HCT116 (cell line): ENCODE measurements at regions of chr10 and their contacts with region 1.

Region 1: DNA sequence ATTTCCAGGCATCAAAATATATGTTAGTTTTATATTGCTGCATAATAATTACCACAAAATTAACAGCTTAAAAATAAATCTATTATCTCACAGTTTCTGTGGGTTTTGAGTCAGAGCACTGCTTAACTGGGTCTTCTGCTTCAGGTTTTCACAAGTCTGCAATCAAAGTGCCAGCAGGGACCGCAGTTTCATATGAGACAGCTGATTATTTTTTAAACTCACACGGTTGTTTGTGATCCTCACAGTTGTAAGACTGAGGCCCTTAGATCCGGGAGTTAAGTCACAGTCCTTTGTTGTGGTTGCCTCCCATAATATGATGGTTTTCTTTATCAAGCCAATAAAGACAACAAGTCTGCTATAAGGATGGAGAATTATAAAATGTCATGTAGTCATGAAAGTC is 146.0 kb upstream of the ZWINT start:
- DNase-seq: no peak
- ATAC-seq: no peak
- H3K4me3 ChIP-seq: no peak overlapping the region
- H3K27ac ChIP-seq: no peak overlapping the region
- H3K4me1 ChIP-seq: no peaks in the 10 kb centered on the region
- H3K27me3 ChIP-seq: no peaks in the 10 kb centered on the region
- CTCF ChIP-seq: no peak
- POLR2A ChIP-seq: no peak
- RAD21 ChIP-seq: no peak

Region 2: GRCh38 chr10:56327117-56327516 is 179.9 kb before region 1 on chr10:
- CTCF ChIA-PET with region 1: no interaction called
- POLR2A ChIA-PET with region 1: no interaction called
- RAD21 ChIA-PET with region 1: no interaction called
- intact Hi-C with region 1: loop called (anchors 10 kb)
- DNase-seq: no peak
- ATAC-seq: no peak
- H3K4me3 ChIP-seq: no peak overlapping the region
- H3K27ac ChIP-seq: no peak overlapping the region
- H3K4me1 ChIP-seq: no peaks in the 10 kb centered on the region
- H3K27me3 ChIP-seq: no peaks in the 10 kb centered on the region
- CTCF ChIP-seq: no peak
- POLR2A ChIP-seq: no peak
- RAD21 ChIP-seq: no peak

Region 3: GRCh38 chr10:56785292-56785691 is 278.3 kb after region 1 on chr10:
- CTCF ChIA-PET with region 1: no interaction called
- POLR2A ChIA-PET with region 1: no interaction called
- RAD21 ChIA-PET with region 1: no interaction called
- intact Hi-C with region 1: no loop called
- DNase-seq: no peak
- ATAC-seq: no peak
- H3K4me3 ChIP-seq: no peak overlapping the region
- H3K27ac ChIP-seq: no peak overlapping the region
- H3K4me1 ChIP-seq: no peaks in the 10 kb centered on the region
- H3K27me3 ChIP-seq: no peaks in the 10 kb centered on the region
- CTCF ChIP-seq: no peak
- POLR2A ChIP-seq: no peak
- RAD21 ChIP-seq: no peak